ENCODE measurements at regions of chr7 and their contacts with region 1.

Region 1: DNA sequence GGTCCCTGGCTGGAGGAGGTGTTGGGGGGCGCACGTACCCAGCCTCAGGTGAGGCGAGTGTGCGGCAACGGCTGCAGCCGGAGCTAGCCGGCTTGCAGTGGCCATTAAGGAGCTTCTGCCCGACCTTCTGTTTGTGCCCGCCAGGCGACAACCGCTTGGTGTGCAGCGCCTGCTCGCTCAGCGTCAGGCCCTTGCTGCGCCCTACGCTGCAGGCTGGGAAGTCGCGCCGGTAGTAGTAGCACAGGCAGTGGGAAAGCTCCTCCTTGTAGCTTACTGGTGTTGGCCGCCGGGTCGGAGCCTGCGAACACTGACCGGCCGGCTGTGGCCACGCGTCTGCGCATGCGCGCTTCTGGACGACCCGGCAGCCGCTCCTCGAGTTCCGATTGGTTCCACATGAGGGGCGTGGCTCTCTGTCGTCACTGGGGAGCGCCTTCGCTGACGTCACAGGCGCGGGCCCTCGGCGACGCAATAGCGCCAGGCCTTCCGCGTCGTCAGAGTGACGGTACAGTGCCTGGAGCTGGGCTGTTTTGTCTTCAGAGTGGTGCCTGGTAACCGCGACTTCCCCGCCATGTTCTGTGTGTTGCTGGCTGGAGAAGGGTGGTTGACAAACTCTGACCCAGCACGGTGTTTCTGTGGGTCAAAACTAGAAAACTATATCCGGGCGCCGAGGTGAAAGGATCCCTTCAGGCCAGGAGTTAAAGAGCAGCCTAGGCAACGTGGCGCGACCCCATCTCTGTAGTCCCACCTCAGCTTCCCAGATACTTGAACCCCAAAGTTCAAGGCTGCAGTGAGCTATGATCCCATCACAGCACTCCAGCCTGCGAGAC is 76.3 kb upstream of the TMEM248 start:
- DNase-seq: peak; percentile 98 to 100 (median 99)
- ATAC-seq: peak; percentile 87
- H3K4me3 ChIP-seq: peak overlapping the region; percentile 90 to 96
- H3K4me3 Mint-ChIP-seq: peak overlapping the region; percentile 97
- H3K27ac ChIP-seq: peak overlapping the region; percentile 97 to 98
- H3K27ac Mint-ChIP-seq: peak overlapping the region; percentile 100
- H3K4me1 ChIP-seq: peaks cover 13% of the 10 kb centered on the region
- H3K4me1 Mint-ChIP-seq: peaks cover 25% of the 10 kb centered on the region
- H3K27me3 ChIP-seq: no peaks in the 10 kb centered on the region
- H3K27me3 Mint-ChIP-seq: no peaks in the 10 kb centered on the region
- CTCF ChIP-seq: peak; percentile 53

Region 2: GRCh38 chr7:65981965-65982792 is 862.6 kb before region 1 on chr7 and contains the start of gene GUSB:
- CTCF ChIA-PET with region 1: no interaction called
- POLR2A ChIA-PET with region 1: interaction called, 3 read pairs
- intact Hi-C with region 1: loop called (anchors 2 to 5 kb)
- DNase-seq: peak; percentile 80 to 93 (median 90)
- ATAC-seq: peak; percentile 87
- H3K4me3 ChIP-seq: peak within 1 kb of the TSS; percentile 83 to 90
- H3K4me3 Mint-ChIP-seq: peak within 1 kb of the TSS; percentile 85
- H3K27ac ChIP-seq: peak within 1 kb of the TSS; percentile 69 to 73
- H3K27ac Mint-ChIP-seq: peak within 1 kb of the TSS; percentile 88
- H3K4me1 ChIP-seq: peaks cover 18% of the 10 kb centered on the region
- H3K4me1 Mint-ChIP-seq: peaks cover 14% of the 10 kb centered on the region
- H3K27me3 ChIP-seq: no peaks in the 10 kb centered on the region
- H3K27me3 Mint-ChIP-seq: no peaks in the 10 kb centered on the region
- CTCF ChIP-seq: no peak
- total RNA-seq, gene GUSB: 37.0 to 41.8 TPM

Region 3: GRCh38 chr7:66591799-66592596 is 252.8 kb before region 1 on chr7:
- CTCF ChIA-PET with region 1: no interaction called
- POLR2A ChIA-PET with region 1: no interaction called
- intact Hi-C with region 1: loop called in 1 of 2 experiments (anchors 10 kb)
- DNase-seq: peak; percentile 69 to 95 (median 91)
- ATAC-seq: peak; percentile 98
- H3K4me3 ChIP-seq: peak overlapping the region; percentile 73 to 95
- H3K4me3 Mint-ChIP-seq: peak overlapping the region; percentile 99
- H3K27ac ChIP-seq: peak overlapping the region; percentile 67 to 89
- H3K27ac Mint-ChIP-seq: peak overlapping the region; percentile 98
- H3K4me1 ChIP-seq: peaks cover 37% of the 10 kb centered on the region
- H3K4me1 Mint-ChIP-seq: peaks cover 49% of the 10 kb centered on the region
- H3K27me3 ChIP-seq: no peaks in the 10 kb centered on the region
- H3K27me3 Mint-ChIP-seq: no peaks in the 10 kb centered on the region
- CTCF ChIP-seq: no peak

Region 4: GRCh38 chr7:66628361-66629140 is 216.2 kb before region 1 on chr7 and contains the start of gene KCTD7:
- CTCF ChIA-PET with region 1: no interaction called
- POLR2A ChIA-PET with region 1: no interaction called
- intact Hi-C with region 1: loop called (anchors 2 to 10 kb)
- DNase-seq: peak; percentile 91 to 98 (median 94)
- ATAC-seq: peak; percentile 89
- H3K4me3 ChIP-seq: peak within 1 kb of the TSS; percentile 91 to 99
- H3K4me3 Mint-ChIP-seq: peak within 1 kb of the TSS; percentile 89
- H3K27ac ChIP-seq: peak within 1 kb of the TSS; percentile 89 to 97
- H3K27ac Mint-ChIP-seq: peak within 1 kb of the TSS; percentile 91
- H3K4me1 ChIP-seq: peaks cover 42% of the 10 kb centered on the region
- H3K4me1 Mint-ChIP-seq: peaks cover 51% of the 10 kb centered on the region
- H3K27me3 ChIP-seq: no peaks in the 10 kb centered on the region
- H3K27me3 Mint-ChIP-seq: no peaks in the 10 kb centered on the region
- CTCF ChIP-seq: no peak
- total RNA-seq, gene KCTD7: 12.9 to 13.2 TPM

Region 5: GRCh38 chr7:66654123-66654732 is 190.5 kb before region 1 on chr7:
- CTCF ChIA-PET with region 1: no interaction called
- POLR2A ChIA-PET with region 1: no interaction called
- intact Hi-C with region 1: loop called (anchors 1 to 10 kb)
- DNase-seq: peak; percentile 94 to 99 (median 98)
- ATAC-seq: peak; percentile 91
- H3K4me3 ChIP-seq: peak overlapping the region; percentile 64 to 86
- H3K4me3 Mint-ChIP-seq: peak overlapping the region; percentile 99
- H3K27ac ChIP-seq: peak overlapping the region; percentile 92 to 98
- H3K27ac Mint-ChIP-seq: peak overlapping the region; percentile 99
- H3K4me1 ChIP-seq: peaks cover 7% of the 10 kb centered on the region
- H3K4me1 Mint-ChIP-seq: peaks cover 24% of the 10 kb centered on the region
- H3K27me3 ChIP-seq: no peaks in the 10 kb centered on the region
- H3K27me3 Mint-ChIP-seq: no peaks in the 10 kb centered on the region
- CTCF ChIP-seq: no peak

Region 6: GRCh38 chr7:66681491-66682349 is 163.0 kb before region 1 on chr7:
- CTCF ChIA-PET with region 1: no interaction called
- POLR2A ChIA-PET with region 1: no interaction called
- intact Hi-C with region 1: loop called (anchors 1 to 2 kb)
- DNase-seq: peak; percentile 87 to 98 (median 97)
- ATAC-seq: peak; percentile 93
- H3K4me3 ChIP-seq: peak overlapping the region; percentile 98
- H3K4me3 Mint-ChIP-seq: peak overlapping the region; percentile 93
- H3K27ac ChIP-seq: peak overlapping the region; percentile 99 to 100
- H3K27ac Mint-ChIP-seq: peak overlapping the region; percentile 97
- H3K4me1 ChIP-seq: peaks cover 13% of the 10 kb centered on the region
- H3K4me1 Mint-ChIP-seq: peaks cover 35% of the 10 kb centered on the region
- H3K27me3 ChIP-seq: no peaks in the 10 kb centered on the region
- H3K27me3 Mint-ChIP-seq: no peaks in the 10 kb centered on the region
- CTCF ChIP-seq: no peak

Region 7: DNA sequence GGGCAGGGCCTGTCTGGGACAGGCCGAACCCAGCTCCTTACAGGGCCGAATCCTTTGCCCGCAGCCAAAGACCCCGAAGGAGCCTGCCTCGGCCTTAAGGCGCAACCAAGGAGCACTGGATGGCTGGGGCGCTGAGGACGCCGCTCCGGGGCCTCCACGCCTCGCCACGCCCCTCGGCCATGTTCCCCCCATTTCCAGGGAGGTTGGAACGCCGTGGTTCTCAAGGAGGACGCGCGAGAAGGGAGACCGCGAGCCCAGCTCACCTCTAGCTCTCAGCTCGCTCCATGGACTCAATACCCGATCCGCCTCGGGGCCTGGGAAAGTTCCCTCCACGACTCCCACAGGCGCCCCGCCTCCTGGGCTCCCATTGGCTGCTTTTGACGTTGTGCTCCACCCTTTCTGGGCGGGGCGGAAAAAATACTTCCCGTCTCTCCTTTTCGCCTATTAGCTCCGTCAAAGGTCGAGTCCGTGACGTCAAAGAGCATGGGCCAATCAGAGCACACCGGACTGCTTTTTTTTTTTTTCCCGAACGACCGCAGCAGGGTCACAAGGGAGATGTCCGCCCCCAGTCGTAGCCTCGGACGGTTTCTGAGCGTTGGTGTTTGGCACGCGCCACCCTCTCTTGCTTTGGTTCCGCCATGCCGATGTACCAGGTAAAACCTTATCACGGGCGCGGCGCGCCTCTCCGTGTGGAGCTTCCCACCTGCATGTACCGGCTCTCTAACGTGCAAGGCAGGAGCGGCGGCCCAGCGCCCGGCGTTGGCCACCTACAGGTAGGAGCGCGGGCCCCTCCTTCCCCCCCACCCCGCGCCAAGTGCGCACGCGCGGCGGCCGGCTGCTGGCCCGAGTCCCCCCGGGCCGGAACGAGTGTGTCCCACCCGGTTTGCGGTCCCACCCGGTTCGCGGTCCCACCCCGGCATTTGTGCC is 457.6 kb after region 1 on chr7:
- CTCF ChIA-PET with region 1: no interaction called
- POLR2A ChIA-PET with region 1: no interaction called
- intact Hi-C with region 1: loop called in 1 of 2 experiments (anchors 5 kb)
- DNase-seq: peak; percentile 93 to 99 (median 97)
- ATAC-seq: peak; percentile 77
- H3K4me3 ChIP-seq: peak overlapping the region; percentile 81 to 99
- H3K4me3 Mint-ChIP-seq: peak overlapping the region; percentile 97
- H3K27ac ChIP-seq: peak overlapping the region; percentile 92 to 93
- H3K27ac Mint-ChIP-seq: peak overlapping the region; percentile 99
- H3K4me1 ChIP-seq: no peaks in the 10 kb centered on the region
- H3K4me1 Mint-ChIP-seq: peaks cover 27% of the 10 kb centered on the region
- H3K27me3 ChIP-seq: no peaks in the 10 kb centered on the region
- H3K27me3 Mint-ChIP-seq: no peaks in the 10 kb centered on the region
- CTCF ChIP-seq: no peak